ENCODE measurements at regions of chr1 and their contacts with region 1.

Region 1: GRCh38 chr1:202599677-202600431 is 110.4 kb downstream of the SYT2 start:
- DNase-seq: peak; percentile 94
- H3K4me3 ChIP-seq: no peak overlapping the region
- H3K27ac ChIP-seq: peak overlapping the region; percentile 51 to 60 (median 57)
- H3K4me1 ChIP-seq: peaks cover 6 to 14% (median 10%) of the 10 kb centered on the region in 4 donors
- H3K27me3 ChIP-seq: no peaks in the 10 kb centered on the region
- CTCF ChIP-seq: peak; percentile 83 to 90 (median 88)
- EP300 ChIP-seq: no peak
- POLR2A ChIP-seq: no peak

Region 2: GRCh38 chr1:202505356-202505755 is 94.5 kb before region 1 on chr1:
- intact Hi-C with region 1: loop called (anchors 2 kb)
- DNase-seq: no peak
- H3K4me3 ChIP-seq: peak overlapping the region; percentile 9 to 41 (median 36)
- H3K27ac ChIP-seq: peak overlapping the region; percentile 84 to 88 (median 87)
- H3K4me1 ChIP-seq: peaks cover 25 to 53% (median 35%) of the 10 kb centered on the region in 4 donors
- H3K27me3 ChIP-seq: no peaks in the 10 kb centered on the region
- CTCF ChIP-seq: no peak
- EP300 ChIP-seq: no peak
- POLR2A ChIP-seq: no peak

Region 3: GRCh38 chr1:202547215-202547614 is 52.6 kb before region 1 on chr1:
- intact Hi-C with region 1: no loop called
- DNase-seq: no peak
- H3K4me3 ChIP-seq: peak overlapping the region in 3 of 4 donors; percentile 55 to 68 (median 60)
- H3K27ac ChIP-seq: peak overlapping the region in 3 of 4 donors; percentile 89 to 92 (median 90)
- H3K4me1 ChIP-seq: peaks cover 35 to 80% (median 72%) of the 10 kb centered on the region in 4 donors
- H3K27me3 ChIP-seq: no peaks in the 10 kb centered on the region
- CTCF ChIP-seq: no peak
- EP300 ChIP-seq: no peak
- POLR2A ChIP-seq: no peak

Measured in esophagus muscularis mucosa (tissue), 4 donors.